ENCODE measurements at regions of chr7 and their contacts with region 1.

Region 1: DNA sequence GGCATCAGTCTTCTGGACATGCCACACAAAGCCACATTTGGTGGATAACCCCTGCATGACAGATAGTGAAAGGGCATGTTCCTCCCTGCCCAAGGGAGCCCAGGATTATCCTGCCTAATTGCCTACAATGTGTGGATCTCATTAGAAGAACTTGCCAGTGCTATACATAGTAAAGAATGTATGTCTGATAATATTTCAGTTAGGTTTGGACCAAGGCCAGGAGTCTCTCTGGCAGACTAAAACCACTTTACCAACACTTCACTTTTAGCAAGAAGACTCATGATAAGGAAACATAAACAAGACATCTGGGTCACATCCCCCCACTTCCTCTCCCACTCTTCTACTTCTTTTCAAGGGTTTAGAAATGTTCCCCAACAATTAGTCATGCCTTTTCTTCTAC is 196.7 kb downstream of the MTERF1 start:
- DNase-seq: no peak
- ATAC-seq: peak; percentile 71

Region 2: GRCh38 chr7:91771921-91772815 is 88.3 kb after region 1 on chr7:
- intact Hi-C with region 1: loop called in 1 of 2 experiments (anchors 10 kb)
- DNase-seq: no peak
- ATAC-seq: peak; percentile 44 to 80

Measured in left cardiac atrium (tissue), 4 donors.